ENCODE measurements at regions of chr1 and their contacts with region 1.

Region 1: DNA sequence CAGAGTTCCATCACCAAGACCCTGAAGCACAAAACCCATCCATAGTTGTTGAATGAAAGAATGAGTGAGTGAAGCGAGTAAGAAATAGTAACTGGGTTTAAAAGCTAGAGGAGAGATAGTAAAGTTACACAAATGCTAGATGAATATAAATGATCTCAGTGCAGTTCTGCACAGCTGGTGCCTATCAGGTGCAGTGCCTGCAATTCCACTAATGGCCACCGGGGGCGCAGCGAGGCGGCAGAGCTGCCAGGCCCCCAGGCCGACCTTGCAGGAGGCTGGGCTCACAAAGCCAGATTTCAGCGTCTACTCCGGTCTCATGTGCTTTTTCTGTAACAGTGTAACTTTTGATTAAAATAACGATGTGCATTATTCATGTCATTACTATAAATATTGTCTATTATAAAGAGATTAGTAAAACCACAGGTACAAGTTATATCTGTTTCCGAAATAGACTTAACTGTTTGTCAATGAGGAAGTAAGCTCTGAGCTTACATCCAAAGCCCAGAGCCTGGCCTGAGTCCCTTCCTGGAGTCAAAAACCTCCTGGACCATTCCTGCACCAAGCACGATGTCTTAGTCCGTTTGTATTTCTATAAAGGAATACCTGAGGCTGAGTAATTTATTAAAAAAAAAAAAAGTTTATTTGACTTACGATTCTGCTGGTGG is 477.6 kb downstream of the NPHP4 start:
- DNase-seq: peak; percentile 60 to 85 (median 75)
- H3K4me3 ChIP-seq: no peak overlapping the region
- H3K27ac ChIP-seq: no peak overlapping the region
- H3K4me1 ChIP-seq: no peaks in the 10 kb centered on the region
- H3K27me3 ChIP-seq: no peaks in the 10 kb centered on the region
- CTCF ChIP-seq: peak; percentile 65 to 92 (median 88)
- EP300 ChIP-seq: no peak
- POLR2A ChIP-seq: no peak

Region 2: GRCh38 chr1:5423109-5423508 is 91.5 kb before region 1 on chr1:
- intact Hi-C with region 1: no loop called
- DNase-seq: no peak
- H3K4me3 ChIP-seq: no peak overlapping the region
- H3K27ac ChIP-seq: no peak overlapping the region
- H3K4me1 ChIP-seq: no peaks in the 10 kb centered on the region
- H3K27me3 ChIP-seq: no peaks in the 10 kb centered on the region
- CTCF ChIP-seq: no peak
- EP300 ChIP-seq: no peak
- POLR2A ChIP-seq: no peak

Region 3: GRCh38 chr1:5745776-5746610 is 231.3 kb after region 1 on chr1:
- intact Hi-C with region 1: loop called (anchors 5 to 10 kb)
- DNase-seq: peak; percentile 59 to 81 (median 69)
- H3K4me3 ChIP-seq: no peak overlapping the region
- H3K27ac ChIP-seq: no peak overlapping the region
- H3K4me1 ChIP-seq: no peaks in the 10 kb centered on the region
- H3K27me3 ChIP-seq: no peaks in the 10 kb centered on the region
- CTCF ChIP-seq: peak; percentile 61 to 78 (median 62)
- EP300 ChIP-seq: no peak
- POLR2A ChIP-seq: no peak

Region 4: GRCh38 chr1:5915587-5916571 is 401.2 kb after region 1 on chr1:
- intact Hi-C with region 1: loop called in 3 of 4 experiments (anchors 2 to 10 kb)
- DNase-seq: peak; percentile 43 to 69 (median 56)
- H3K4me3 ChIP-seq: no peak overlapping the region
- H3K27ac ChIP-seq: peak overlapping the region in 1 of 2 donors; percentile 53
- H3K4me1 ChIP-seq: peaks cover 7% of the 10 kb centered on the region
- H3K27me3 ChIP-seq: no peaks in the 10 kb centered on the region
- CTCF ChIP-seq: peak; percentile 61 to 71 (median 66)
- EP300 ChIP-seq: no peak
- POLR2A ChIP-seq: no peak

Region 5: DNA sequence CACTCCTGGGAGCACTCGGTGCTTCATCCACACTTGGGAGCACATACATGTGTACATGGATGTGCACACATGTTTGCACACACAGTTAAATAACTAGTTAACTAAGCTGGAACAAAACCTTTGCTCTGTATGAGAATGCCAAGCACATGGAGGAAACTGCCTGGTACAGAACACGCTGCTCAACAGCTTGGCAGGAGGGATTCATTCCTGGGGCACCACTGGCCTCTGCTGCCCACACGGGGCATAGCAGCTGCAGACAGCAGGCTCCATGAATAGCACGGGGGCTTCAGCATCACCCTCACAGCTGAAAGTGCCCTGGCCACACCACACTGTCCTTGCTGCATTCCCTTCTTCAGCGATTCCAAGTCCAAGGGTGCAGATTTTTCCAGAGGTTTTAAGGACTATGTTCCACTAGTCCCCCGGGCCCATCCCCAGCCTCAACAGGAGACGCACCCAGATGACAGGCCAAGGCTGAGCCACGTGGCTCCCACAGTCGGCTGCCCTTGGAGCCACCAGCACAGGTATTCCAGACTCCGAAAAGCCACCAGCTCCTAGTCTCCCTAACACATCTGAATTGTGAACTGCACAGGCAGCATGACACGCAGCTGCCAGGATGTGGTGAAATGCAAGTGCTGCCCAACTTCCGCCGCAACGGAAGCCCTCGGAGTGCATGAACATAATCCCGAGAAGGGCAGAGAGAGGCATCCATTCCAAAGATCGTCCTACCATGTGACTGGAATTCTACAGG is 460.7 kb after region 1 on chr1:
- intact Hi-C with region 1: loop called in 2 of 4 experiments (anchors 5 to 10 kb)
- DNase-seq: peak; percentile 48 to 82 (median 63)
- H3K4me3 ChIP-seq: no peak overlapping the region
- H3K27ac ChIP-seq: no peak overlapping the region
- H3K4me1 ChIP-seq: no peaks in the 10 kb centered on the region
- H3K27me3 ChIP-seq: no peaks in the 10 kb centered on the region
- CTCF ChIP-seq: peak; percentile 51 to 66 (median 55)
- EP300 ChIP-seq: no peak
- POLR2A ChIP-seq: no peak

Measured in ovary (tissue), 10 donors.